ENCODE measurements at regions of chr15 and their contacts with region 1.

Region 1: GRCh38 chr15:32774022-32774421 is 56.2 kb downstream of the GREM1 start:
- DNase-seq: peak; percentile 98
- ATAC-seq: peak; percentile 98
- H3K4me3 ChIP-seq: no peak overlapping the region
- H3K27ac ChIP-seq: peak overlapping the region; percentile 96
- H3K4me1 ChIP-seq: peaks cover 33% of the 10 kb centered on the region
- H3K27me3 ChIP-seq: no peaks in the 10 kb centered on the region
- CTCF ChIP-seq: no peak

Region 2: GRCh38 chr15:32683906-32684584 is 90.0 kb before region 1 on chr15:
- CTCF ChIA-PET with region 1: no interaction called
- POLR2A ChIA-PET with region 1: no interaction called
- intact Hi-C with region 1: loop called (anchors 2 kb)
- DNase-seq: peak; percentile 88
- ATAC-seq: peak; percentile 73
- H3K4me3 ChIP-seq: no peak overlapping the region
- H3K27ac ChIP-seq: peak overlapping the region; percentile 70
- H3K4me1 ChIP-seq: peaks cover 48% of the 10 kb centered on the region
- H3K27me3 ChIP-seq: no peaks in the 10 kb centered on the region
- CTCF ChIP-seq: no peak

Region 3: DNA sequence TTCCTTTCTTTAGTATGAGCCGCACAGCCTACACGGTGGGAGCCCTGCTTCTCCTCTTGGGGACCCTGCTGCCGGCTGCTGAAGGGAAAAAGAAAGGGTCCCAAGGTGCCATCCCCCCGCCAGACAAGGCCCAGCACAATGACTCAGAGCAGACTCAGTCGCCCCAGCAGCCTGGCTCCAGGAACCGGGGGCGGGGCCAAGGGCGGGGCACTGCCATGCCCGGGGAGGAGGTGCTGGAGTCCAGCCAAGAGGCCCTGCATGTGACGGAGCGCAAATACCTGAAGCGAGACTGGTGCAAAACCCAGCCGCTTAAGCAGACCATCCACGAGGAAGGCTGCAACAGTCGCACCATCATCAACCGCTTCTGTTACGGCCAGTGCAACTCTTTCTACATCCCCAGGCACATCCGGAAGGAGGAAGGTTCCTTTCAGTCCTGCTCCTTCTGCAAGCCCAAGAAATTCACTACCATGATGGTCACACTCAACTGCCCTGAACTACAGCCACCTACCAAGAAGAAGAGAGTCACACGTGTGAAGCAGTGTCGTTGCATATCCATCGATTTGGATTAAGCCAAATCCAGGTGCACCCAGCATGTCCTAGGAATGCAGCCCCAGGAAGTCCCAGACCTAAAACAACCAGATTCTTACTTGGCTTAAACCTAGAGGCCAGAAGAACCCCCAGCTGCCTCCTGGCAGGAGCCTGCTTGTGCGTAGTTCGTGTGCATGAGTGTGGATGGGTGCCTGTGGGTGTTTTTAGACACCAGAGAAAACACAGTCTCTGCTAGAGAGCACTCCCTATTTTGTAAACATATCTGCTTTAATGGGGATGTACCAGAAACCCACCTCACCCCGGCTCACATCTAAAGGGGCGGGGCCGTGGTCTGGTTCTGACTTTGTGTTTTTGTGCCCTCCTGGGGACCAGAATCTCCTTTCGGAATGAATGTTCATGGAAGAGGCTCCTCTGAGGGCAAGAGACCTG is 43.1 kb before region 1 on chr15:
- CTCF ChIA-PET with region 1: no interaction called
- POLR2A ChIA-PET with region 1: interaction called, 10 read pairs
- intact Hi-C with region 1: loop called (anchors 1 kb)
- DNase-seq: peak; percentile 57
- ATAC-seq: no peak
- H3K4me3 ChIP-seq: no peak overlapping the region
- H3K27ac ChIP-seq: no peak overlapping the region
- H3K4me1 ChIP-seq: peaks cover 12% of the 10 kb centered on the region; the same call in 1 of the 2 replicates
- H3K27me3 ChIP-seq: no peaks in the 10 kb centered on the region
- CTCF ChIP-seq: no peak

Region 4: GRCh38 chr15:32736005-32736700 is 37.9 kb before region 1 on chr15:
- CTCF ChIA-PET with region 1: no interaction called
- POLR2A ChIA-PET with region 1: interaction called, 10 read pairs
- intact Hi-C with region 1: loop called (anchors 1 kb)
- DNase-seq: no peak
- ATAC-seq: no peak; the same call in 1 of the 2 replicates
- H3K4me3 ChIP-seq: no peak overlapping the region
- H3K27ac ChIP-seq: no peak overlapping the region
- H3K4me1 ChIP-seq: peaks cover 12% of the 10 kb centered on the region; the same call in 1 of the 2 replicates
- H3K27me3 ChIP-seq: no peaks in the 10 kb centered on the region
- CTCF ChIP-seq: no peak

Region 5: DNA sequence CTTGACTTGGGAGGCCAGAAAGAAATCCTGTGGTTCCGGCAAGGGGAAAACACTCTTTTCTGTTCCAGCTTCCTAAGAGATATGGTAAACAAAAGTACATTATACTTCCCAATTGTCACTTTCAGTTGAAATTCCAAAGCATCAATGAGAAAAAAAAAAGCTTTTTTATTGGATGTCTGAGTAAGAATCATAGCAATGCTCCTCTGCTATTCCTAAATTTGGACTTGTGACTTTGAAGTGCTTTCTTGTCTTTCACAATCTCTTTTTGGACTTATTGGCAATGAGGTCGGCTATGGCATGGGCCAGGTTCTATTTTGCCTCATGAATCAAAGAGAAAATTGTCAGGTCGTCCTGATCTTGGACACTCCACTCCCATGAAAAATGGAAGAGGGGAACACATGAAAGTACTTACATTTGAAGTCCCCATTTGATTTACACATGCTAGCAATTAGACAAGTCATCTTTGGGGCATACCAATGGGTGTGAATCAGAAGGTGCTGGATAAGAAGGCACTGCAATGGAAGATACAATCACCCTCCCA is 114.3 kb after region 1 on chr15:
- CTCF ChIA-PET with region 1: no interaction called
- POLR2A ChIA-PET with region 1: no interaction called
- intact Hi-C with region 1: no loop called
- DNase-seq: no peak
- ATAC-seq: no peak
- H3K4me3 ChIP-seq: no peak overlapping the region
- H3K27ac ChIP-seq: no peak overlapping the region
- H3K4me1 ChIP-seq: no peaks in the 10 kb centered on the region
- H3K27me3 ChIP-seq: no peaks in the 10 kb centered on the region
- CTCF ChIP-seq: no peak

Region 6: GRCh38 chr15:33392453-33392852 is 618.4 kb after region 1 on chr15:
- CTCF ChIA-PET with region 1: no interaction called
- POLR2A ChIA-PET with region 1: no interaction called
- intact Hi-C with region 1: no loop called
- DNase-seq: no peak
- ATAC-seq: no peak
- H3K4me3 ChIP-seq: no peak overlapping the region
- H3K27ac ChIP-seq: no peak overlapping the region
- H3K4me1 ChIP-seq: no peaks in the 10 kb centered on the region
- H3K27me3 ChIP-seq: peaks cover 92% of the 10 kb centered on the region
- CTCF ChIP-seq: 0 out of 2 replicates have a peak, but pooled peaks have one; percentile 17